ENCODE measurements at regions of chr5 and their contacts with region 1.

Region 1: GRCh38 chr5:43120720-43121564 is at the start of gene ZNF131:
- DNase-seq: peak; percentile 98
- H3K4me3 ChIP-seq: peak within 1 kb of the TSS; percentile 71 to 90 (median 82)
- H3K27ac ChIP-seq: peak within 1 kb of the TSS; percentile 96 to 100 (median 98)
- H3K4me1 ChIP-seq: peaks cover 31 to 46% (median 40%) of the 10 kb centered on the region in 4 donors
- H3K27me3 ChIP-seq: no peaks in the 10 kb centered on the region
- CTCF ChIP-seq: no peak
- EP300 ChIP-seq: peak; percentile 61
- POLR2A ChIP-seq: no peak
- total RNA-seq, gene ZNF131: 22.1 to 35.3 (median 23.7) TPM

Region 2: DNA sequence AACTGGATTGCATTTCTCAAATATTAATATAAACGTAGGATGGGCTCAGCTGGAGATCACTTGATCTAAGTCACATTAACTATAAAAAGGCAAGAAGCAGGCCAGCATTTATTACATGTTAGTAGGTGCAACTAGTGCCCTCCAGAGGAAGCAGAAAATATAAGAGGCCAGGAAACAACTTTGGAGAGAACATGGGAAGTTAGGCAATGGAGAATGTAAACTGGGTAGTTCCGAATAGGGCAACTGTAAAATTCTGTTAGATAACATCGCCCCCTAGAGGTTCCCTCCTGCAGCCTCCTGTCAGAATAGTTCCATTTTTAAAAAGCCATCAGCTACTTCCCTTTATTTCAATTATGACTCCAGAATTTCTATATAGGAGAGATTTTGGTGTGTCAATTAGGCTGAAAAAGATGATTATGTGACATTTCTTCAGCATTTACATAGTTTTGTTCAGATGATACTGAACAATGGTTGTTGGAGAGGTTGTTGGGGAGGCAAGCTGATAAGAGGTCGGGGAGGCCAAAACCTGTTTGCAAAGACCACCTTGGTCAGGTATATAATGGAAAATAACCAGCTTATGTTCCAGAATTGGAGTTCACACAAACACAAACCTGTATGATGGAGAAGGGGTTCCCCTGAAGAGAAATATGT is 268.9 kb after region 1 on chr5:
- intact Hi-C with region 1: loop called (anchors 10 kb)
- DNase-seq: peak; percentile 92
- H3K4me3 ChIP-seq: no peak overlapping the region
- H3K27ac ChIP-seq: no peak overlapping the region
- H3K4me1 ChIP-seq: peaks cover 4 to 10% (median 6%) of the 10 kb centered on the region in 4 donors
- H3K27me3 ChIP-seq: no peaks in the 10 kb centered on the region
- CTCF ChIP-seq: peak; percentile 78 to 92 (median 80)
- EP300 ChIP-seq: no peak
- POLR2A ChIP-seq: no peak

Region 3: DNA sequence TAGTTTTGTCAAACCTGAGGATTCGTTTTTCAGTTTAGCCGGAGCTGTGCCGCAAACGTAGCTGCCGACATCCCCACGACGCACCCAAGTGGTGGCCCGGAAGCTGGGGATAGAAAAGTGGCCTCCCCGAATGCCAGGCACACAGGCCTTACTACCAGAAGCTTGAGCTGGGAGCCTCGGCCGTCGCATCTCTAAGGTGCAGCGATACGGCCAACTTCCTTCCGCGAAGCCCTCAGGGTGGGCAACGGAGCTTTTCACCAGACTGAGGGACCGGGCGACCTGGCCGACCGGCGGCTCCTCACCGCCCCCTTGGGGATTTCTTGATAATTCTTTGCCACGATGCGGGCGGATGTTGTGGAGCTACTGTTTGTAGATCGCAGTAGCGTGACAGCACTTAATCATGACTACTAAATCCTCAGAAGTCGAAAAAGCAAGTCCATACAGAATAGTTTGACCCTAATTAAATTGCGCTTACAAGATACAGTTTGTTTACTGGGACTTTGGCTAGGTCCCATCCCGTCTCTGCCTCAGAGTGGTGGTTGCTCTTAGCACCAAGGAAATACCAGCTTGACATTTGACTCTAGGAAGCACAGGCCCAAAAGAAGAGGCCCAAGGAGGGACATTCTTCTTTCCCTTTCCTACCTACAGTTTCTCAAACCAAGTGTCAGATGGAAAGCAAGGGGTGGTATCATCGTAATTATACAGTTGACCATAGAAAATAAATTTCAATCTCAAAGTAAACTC is 363.3 kb after region 1 on chr5:
- intact Hi-C with region 1: loop called (anchors 10 kb)
- DNase-seq: peak; percentile 96
- H3K4me3 ChIP-seq: peak overlapping the region; percentile 76 to 89 (median 84)
- H3K27ac ChIP-seq: peak overlapping the region; percentile 91 to 97 (median 95)
- H3K4me1 ChIP-seq: peaks cover 14 to 31% (median 22%) of the 10 kb centered on the region in 4 donors
- H3K27me3 ChIP-seq: no peaks in the 10 kb centered on the region
- CTCF ChIP-seq: peak; percentile 68 to 79 (median 72)
- EP300 ChIP-seq: no peak
- POLR2A ChIP-seq: no peak

Region 4: GRCh38 chr5:43514816-43515677 is 394.1 kb after region 1 on chr5 and contains the start of gene C5orf34:
- intact Hi-C with region 1: no loop called
- DNase-seq: peak; percentile 98
- H3K4me3 ChIP-seq: peak within 1 kb of the TSS; percentile 63 to 75 (median 68)
- H3K27ac ChIP-seq: peak within 1 kb of the TSS; percentile 85 to 87 (median 86)
- H3K4me1 ChIP-seq: peaks cover 8 to 25% (median 20%) of the 10 kb centered on the region in 4 donors
- H3K27me3 ChIP-seq: no peaks in the 10 kb centered on the region
- CTCF ChIP-seq: peak in 2 of 3 experiments; percentile 3 to 6
- EP300 ChIP-seq: no peak
- POLR2A ChIP-seq: peak; percentile 25
- total RNA-seq, gene C5orf34: 0.42 to 1.6 (median 1.4) TPM

Measured in esophagus muscularis mucosa (tissue), 4 donors.